ENCODE measurements at regions of chr14 and their contacts with region 1.

Region 1: GRCh38 chr14:97724265-97724731 is 927.1 kb downstream of the VRK1 start:
- DNase-seq: peak; percentile 31
- H3K4me3 Mint-ChIP-seq: peak overlapping the region; percentile 72
- H3K27ac Mint-ChIP-seq: peak overlapping the region; percentile 95
- H3K4me1 Mint-ChIP-seq: peaks cover 58% of the 10 kb centered on the region
- H3K27me3 Mint-ChIP-seq: no peaks in the 10 kb centered on the region

Region 2: GRCh38 chr14:96564389-96564788 is 1159.9 kb before region 1 on chr14:
- intact Hi-C with region 1: no loop called
- DNase-seq: no peak
- H3K4me3 Mint-ChIP-seq: no peak overlapping the region
- H3K27ac Mint-ChIP-seq: no peak overlapping the region
- H3K4me1 Mint-ChIP-seq: peaks cover 3% of the 10 kb centered on the region
- H3K27me3 Mint-ChIP-seq: no peaks in the 10 kb centered on the region

Region 3: GRCh38 chr14:97620066-97620465 is 104.2 kb before region 1 on chr14:
- intact Hi-C with region 1: loop called (anchors 5 kb)
- DNase-seq: no peak
- H3K4me3 Mint-ChIP-seq: peak overlapping the region; percentile 59
- H3K27ac Mint-ChIP-seq: peak overlapping the region; percentile 84
- H3K4me1 Mint-ChIP-seq: peaks cover 47% of the 10 kb centered on the region
- H3K27me3 Mint-ChIP-seq: no peaks in the 10 kb centered on the region

Region 4: DNA sequence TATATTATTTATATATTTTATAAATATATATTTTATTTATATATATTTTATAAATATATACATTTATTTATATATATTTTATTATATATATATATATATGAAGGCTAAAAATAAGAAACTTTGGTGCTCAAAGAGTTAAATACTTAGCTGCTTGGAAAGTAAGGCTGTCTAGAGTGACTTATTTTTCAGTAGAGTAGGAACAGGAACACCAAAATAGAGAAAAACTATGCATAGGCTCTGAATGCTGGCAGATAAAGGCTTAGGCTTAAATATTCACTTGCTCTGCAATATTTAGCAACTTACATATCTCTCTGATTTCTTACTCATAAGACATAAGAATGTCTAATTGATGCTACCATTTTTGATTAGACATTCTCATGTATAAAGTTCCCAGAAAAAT is 64.1 kb after region 1 on chr14:
- intact Hi-C with region 1: loop called (anchors 5 kb)
- DNase-seq: no peak
- H3K4me3 Mint-ChIP-seq: no peak overlapping the region
- H3K27ac Mint-ChIP-seq: no peak overlapping the region
- H3K4me1 Mint-ChIP-seq: peaks cover 27% of the 10 kb centered on the region
- H3K27me3 Mint-ChIP-seq: no peaks in the 10 kb centered on the region